ENCODE measurements at regions of chr18 and their contacts with region 1.

Region 1: GRCh38 chr18:47418746-47419145 is 167.3 kb upstream of the SKOR2 start:
- DNase-seq: no peak
- H3K4me3 ChIP-seq: no peak overlapping the region
- H3K27ac ChIP-seq: no peak overlapping the region
- H3K4me1 ChIP-seq: no peaks in the 10 kb centered on the region
- H3K27me3 ChIP-seq: peaks cover 34% of the 10 kb centered on the region
- CTCF ChIP-seq: no peak

Region 2: DNA sequence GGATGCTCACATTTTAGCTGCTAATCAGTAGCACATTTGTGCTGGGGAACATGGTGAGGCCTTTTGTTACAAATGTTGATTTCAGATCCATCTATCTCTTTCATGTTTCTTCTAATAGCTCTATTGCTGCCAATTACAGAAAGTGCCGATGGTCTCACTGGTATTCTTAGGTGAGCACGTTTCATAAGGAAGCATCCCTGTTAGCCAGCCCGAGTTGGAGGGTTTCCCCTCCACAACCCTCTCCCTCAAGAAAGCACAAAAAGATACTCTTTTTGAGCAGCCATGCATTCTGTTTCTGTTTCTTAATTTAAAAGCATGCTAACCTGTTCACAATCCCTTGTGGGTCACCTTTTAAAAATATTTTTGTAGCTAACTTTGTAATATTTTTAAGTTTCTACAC is 631.1 kb before region 1 on chr18:
- CTCF ChIA-PET with region 1: interaction called, 12 read pairs
- POLR2A ChIA-PET with region 1: no interaction called
- intact Hi-C with region 1: no loop called
- DNase-seq: no peak
- H3K4me3 ChIP-seq: no peak overlapping the region
- H3K27ac ChIP-seq: no peak overlapping the region
- H3K4me1 ChIP-seq: no peaks in the 10 kb centered on the region
- H3K27me3 ChIP-seq: no peaks in the 10 kb centered on the region
- CTCF ChIP-seq: no peak

Region 3: DNA sequence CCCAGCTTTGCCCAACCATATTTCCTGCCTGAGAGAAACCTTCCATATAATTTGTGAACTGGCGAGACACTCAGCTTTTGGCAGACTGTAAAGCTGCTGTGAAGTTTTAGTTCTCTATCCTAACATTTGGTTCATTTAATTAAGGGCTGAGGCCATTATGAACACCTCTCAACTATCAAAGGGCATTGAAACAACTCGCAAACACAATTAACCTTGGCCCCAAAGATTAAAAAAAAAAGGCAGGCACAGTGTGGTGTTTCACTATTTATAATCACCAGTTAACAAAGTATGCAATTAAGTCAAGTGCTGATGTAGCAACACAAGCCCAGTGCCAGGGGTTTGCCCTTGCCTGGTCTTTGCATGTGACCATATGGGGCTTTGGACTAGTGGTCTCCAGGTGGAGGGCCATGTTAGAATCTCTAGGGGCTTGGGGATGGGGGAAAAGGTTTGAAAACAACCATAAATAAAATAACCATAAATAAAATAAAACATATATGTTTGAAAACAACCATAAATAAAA is 130.3 kb after region 1 on chr18:
- CTCF ChIA-PET with region 1: no interaction called
- POLR2A ChIA-PET with region 1: no interaction called
- intact Hi-C with region 1: no loop called
- DNase-seq: no peak
- H3K4me3 ChIP-seq: no peak overlapping the region
- H3K27ac ChIP-seq: no peak overlapping the region
- H3K4me1 ChIP-seq: no peaks in the 10 kb centered on the region
- H3K27me3 ChIP-seq: peaks cover 49% of the 10 kb centered on the region
- CTCF ChIP-seq: no peak